ENCODE measurements at regions of chr17 and their contacts with region 1.

Region 1: GRCh38 chr17:18960803-18961511 is 9.0 kb downstream of the SLC5A10 start:
- DNase-seq: no peak
- H3K4me3 ChIP-seq: no peak overlapping the region
- CTCF ChIP-seq: peak; percentile 96

Region 2: DNA sequence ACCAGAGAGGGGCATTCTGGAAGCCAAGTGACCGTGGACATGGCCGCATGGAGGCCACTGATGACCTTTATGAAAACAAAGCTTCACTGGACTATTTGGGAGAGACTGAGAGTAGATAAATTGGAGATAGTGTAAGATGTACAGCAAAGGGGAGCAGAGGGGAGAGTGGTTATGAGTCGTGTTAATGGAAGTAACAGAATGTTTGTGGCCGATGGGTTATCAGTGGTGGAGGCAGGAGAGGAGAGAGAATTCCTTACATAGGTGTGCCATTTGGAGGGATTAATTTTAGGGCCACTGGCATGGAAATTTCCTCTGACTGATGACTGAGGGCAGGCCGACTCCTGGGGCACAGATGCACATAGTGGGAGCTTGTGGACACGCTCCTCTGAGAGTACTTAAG is 83.9 kb before region 1 on chr17:
- CTCF ChIA-PET with region 1: no interaction called
- POLR2A ChIA-PET with region 1: no interaction called
- DNase-seq: no peak
- H3K4me3 ChIP-seq: no peak overlapping the region
- CTCF ChIP-seq: no peak

Region 3: GRCh38 chr17:18896146-18896545 is 64.8 kb before region 1 on chr17:
- CTCF ChIA-PET with region 1: no interaction called
- POLR2A ChIA-PET with region 1: no interaction called
- DNase-seq: no peak
- H3K4me3 ChIP-seq: no peak overlapping the region
- CTCF ChIP-seq: no peak

Region 4: GRCh38 chr17:18921912-18922451 is 39.0 kb before region 1 on chr17:
- CTCF ChIA-PET with region 1: no interaction called
- POLR2A ChIA-PET with region 1: no interaction called
- DNase-seq: no peak
- H3K4me3 ChIP-seq: no peak overlapping the region
- CTCF ChIP-seq: no peak

Region 5: GRCh38 chr17:18937981-18938691 is 22.8 kb before region 1 on chr17:
- CTCF ChIA-PET with region 1: interaction called, 14 read pairs
- POLR2A ChIA-PET with region 1: no interaction called
- DNase-seq: no peak
- H3K4me3 ChIP-seq: no peak overlapping the region
- CTCF ChIP-seq: no peak

Region 6: DNA sequence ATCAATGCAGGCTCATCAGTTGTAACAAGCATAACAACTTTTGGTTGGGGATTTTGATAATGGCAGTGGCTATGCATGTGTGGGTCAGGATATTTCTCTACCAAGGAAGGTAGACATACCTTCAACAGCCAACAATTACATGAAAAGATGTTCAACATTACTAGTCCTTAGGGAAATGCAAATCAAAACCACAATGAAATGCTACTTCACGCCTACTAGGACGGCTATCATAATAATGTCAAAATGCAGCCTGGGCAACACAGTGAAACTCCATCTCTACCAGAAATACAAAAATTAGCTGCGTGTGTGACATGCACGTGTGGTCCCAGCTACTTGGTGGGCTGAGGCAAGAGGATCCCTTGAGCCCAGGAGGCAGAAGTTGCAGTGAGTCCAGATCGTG is 16.3 kb before region 1 on chr17:
- CTCF ChIA-PET with region 1: interaction called, 27 read pairs
- POLR2A ChIA-PET with region 1: no interaction called
- DNase-seq: no peak
- H3K4me3 ChIP-seq: no peak overlapping the region
- CTCF ChIP-seq: no peak

Region 7: DNA sequence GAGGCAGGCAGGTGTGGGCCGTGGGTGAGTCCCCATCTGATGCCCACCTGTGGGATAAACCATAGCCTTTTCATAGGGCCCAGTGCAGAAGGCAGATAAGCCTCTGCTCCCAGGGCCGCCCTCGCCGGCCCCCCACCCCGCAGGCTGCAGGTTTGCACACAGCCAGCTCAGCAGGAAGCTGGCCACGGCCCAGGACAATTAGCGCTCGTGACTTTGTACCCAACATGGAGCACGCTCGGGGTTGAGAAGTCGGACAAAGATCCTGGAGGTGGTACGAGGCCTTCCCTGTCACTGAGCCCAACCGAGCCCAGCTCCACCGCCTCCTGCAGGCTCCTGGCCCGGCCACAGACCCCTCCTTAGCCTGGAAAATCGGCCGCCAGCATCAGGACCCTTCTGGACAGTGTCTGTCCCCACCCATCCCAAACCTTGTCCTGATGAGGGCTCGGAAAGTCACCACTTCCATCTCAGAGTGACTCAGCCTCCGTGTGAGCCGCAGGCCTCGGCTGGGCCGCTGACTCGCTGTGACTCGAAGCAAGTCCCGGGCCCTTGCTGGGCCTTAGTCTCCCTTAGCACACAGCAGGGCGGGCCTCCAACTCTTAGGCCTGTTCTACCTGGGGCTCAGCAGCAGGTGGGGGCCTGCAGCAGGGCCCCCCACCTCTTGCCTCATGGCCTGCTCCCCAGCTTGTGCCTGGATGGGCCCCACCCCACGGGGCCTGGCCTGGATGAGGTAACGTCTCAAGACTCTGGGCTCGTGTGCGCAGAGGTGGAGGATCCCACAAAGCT is 20.9 kb after region 1 on chr17:
- CTCF ChIA-PET with region 1: interaction called, 113 read pairs
- POLR2A ChIA-PET with region 1: no interaction called
- DNase-seq: peak; percentile 38
- H3K4me3 ChIP-seq: no peak overlapping the region
- CTCF ChIP-seq: no peak

Region 8: GRCh38 chr17:18997650-18998196 is 36.8 kb after region 1 on chr17:
- CTCF ChIA-PET with region 1: interaction called, 19 read pairs
- POLR2A ChIA-PET with region 1: no interaction called
- DNase-seq: no peak
- H3K4me3 ChIP-seq: no peak overlapping the region
- CTCF ChIP-seq: no peak

Region 9: GRCh38 chr17:19004421-19005136 is 43.6 kb after region 1 on chr17 and contains the start of gene FAM83G:
- CTCF ChIA-PET with region 1: interaction called, 15 read pairs
- POLR2A ChIA-PET with region 1: interaction called, 3 read pairs
- DNase-seq: no peak
- H3K4me3 ChIP-seq: peak within 1 kb of the TSS; percentile 63
- CTCF ChIP-seq: no peak

Region 10: DNA sequence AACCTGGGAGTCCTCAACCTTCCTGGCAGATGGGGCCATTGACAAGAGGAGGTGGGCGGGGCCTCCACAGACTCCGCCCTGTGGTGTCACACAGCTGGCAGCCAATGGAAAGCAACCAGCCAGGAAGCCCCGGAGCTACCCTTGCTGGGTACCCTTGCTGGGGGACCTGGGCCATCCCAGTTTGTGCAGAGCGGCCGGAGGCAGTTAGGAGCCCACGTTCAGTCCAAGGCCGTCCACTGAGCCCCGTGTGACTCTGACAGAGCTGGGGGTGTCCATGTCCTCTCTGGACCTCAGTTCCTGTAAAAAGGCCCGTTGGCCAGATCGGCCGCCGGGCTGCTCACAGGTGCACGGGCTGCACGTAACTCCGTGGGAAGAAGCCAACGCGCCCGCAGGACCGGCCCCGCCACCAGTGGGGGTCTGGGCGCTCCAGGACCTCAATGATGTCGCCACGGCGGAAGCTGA is 60.7 kb after region 1 on chr17:
- CTCF ChIA-PET with region 1: interaction called, 13 read pairs
- POLR2A ChIA-PET with region 1: no interaction called
- DNase-seq: no peak
- H3K4me3 ChIP-seq: no peak overlapping the region
- CTCF ChIP-seq: no peak

Region 11: DNA sequence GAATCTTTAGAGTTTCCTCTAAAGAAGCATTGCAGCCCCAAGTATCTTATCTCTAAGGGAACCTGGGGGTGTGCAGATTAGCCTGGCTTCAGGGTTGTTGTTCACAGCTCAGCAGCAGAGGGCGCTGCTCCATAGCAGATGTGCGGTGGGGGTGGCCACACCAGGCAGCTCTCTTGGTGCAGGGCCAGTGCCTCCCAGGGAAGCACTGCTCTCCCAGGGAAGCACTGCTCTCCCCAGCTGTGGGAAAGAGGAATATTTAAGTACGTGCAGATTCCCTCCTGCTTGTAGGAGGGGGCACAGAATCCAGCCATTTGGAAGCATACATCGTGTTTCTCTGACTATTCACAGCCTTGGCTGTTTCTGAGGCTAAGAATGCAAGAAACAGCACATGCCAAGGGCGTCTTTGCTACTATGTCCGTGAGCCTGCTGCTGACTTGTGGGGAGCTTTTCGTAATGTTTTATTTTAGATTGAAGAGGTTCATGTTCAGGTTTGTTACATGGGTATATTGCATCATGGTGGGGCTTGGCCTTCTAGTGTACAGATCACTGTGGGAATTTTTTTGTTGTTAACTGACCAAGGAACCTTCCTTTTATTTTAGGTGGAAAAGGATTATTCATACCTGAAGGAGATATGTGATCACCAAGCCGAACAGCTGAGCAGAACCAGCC is 1266.0 kb after region 1 on chr17:
- CTCF ChIA-PET with region 1: no interaction called
- POLR2A ChIA-PET with region 1: no interaction called
- DNase-seq: peak; percentile 45
- H3K4me3 ChIP-seq: no peak overlapping the region
- CTCF ChIP-seq: peak; percentile 85